ENCODE measurements at regions of chr6 and their contacts with region 1.

Region 1: GRCh38 chr6:148780918-148781436 is 34.1 kb downstream of the UST start:
- H3K4me3 Mint-ChIP-seq: no peak overlapping the region
- H3K27ac Mint-ChIP-seq: no peak overlapping the region
- H3K4me1 Mint-ChIP-seq: peaks cover 26% of the 10 kb centered on the region
- H3K27me3 Mint-ChIP-seq: peaks cover 10% of the 10 kb centered on the region

Region 2: GRCh38 chr6:148746363-148747144 is 34.4 kb before region 1 on chr6 and contains the start of gene UST:
- intact Hi-C with region 1: loop called (anchors 5 kb)
- H3K4me3 Mint-ChIP-seq: peak within 1 kb of the TSS; percentile 93
- H3K27ac Mint-ChIP-seq: peak within 1 kb of the TSS; percentile 89
- H3K4me1 Mint-ChIP-seq: peaks cover 18% of the 10 kb centered on the region
- H3K27me3 Mint-ChIP-seq: peaks cover 76% of the 10 kb centered on the region